Activated CD4-positive, alpha-beta T cell treated with anti-CD3 and anti-CD28 coated beads, Interleukin-2, amount 10 ng/mL, durations not matched to agents 7 days and 5 days (primary cell): ENCODE measurements at regions of chr2 and their contacts with region 1.

Region 1: DNA sequence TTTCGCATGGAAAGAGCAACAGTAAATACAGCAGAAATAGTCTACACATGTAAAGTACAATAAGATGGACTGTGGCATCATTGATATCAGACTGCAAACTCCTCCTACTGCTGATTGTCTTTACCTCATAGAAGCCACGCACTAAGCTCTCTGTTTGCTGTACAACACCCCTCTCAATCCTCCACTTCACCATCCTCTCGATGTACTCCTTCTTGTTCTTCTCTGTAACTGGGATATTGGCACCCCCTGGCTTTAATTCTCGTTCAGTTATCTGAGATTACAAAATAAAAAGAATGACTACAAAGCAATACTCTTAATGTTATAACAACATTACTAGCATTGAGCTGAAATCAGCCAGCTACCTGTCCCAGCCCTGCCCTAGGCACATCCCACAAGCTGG is 49.3 kb upstream of the STK17B start:
- DNase-seq: no peak
- H3K4me3 Mint-ChIP-seq: no peak overlapping the region
- H3K27ac Mint-ChIP-seq: peak overlapping the region; percentile 7
- H3K4me1 Mint-ChIP-seq: peaks cover 54% of the 10 kb centered on the region
- H3K27me3 Mint-ChIP-seq: no peaks in the 10 kb centered on the region

Region 2: DNA sequence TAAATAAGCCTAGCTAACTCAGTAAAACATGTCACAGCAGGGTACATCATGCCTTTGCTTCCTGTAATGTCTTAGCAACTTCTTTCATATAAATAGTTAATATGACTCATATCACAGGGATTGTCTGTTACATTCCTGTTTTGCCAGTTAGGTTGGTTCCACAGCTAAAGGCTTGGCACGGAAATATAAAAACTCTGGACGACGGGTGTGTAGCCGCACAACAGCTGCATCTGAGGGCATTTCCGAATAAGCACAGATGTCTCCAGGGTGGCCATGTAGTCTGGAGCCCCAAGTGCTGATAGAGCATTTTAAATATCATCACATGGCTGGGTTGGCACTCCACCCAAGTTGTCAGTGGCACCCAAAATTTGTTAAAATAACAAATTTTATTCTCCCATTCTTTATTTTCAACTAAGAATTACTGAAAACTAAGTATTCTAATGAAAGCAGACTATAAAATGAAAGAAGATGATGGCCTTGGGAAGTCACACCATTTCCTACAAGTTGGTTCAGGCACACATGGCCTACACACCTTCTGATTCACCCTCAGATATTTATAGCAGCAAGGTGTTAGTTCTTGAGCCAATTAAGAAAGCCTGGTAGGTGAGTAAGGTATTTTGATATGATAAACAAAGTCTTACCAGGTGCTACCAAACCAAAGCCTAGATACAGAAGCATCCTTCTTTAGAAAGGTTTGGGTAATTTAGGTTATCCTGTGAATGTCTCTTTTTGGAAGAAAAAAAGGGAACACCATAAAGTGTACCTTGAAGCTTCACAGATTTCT is 12.5 kb after region 1 on chr2:
- CTCF ChIA-PET with region 1: interaction called, 61 read pairs
- POLR2A ChIA-PET with region 1: no interaction called
- DNase-seq: no peak
- H3K4me3 Mint-ChIP-seq: no peak overlapping the region
- H3K27ac Mint-ChIP-seq: peak overlapping the region; percentile 88
- H3K4me1 Mint-ChIP-seq: peaks cover 94% of the 10 kb centered on the region
- H3K27me3 Mint-ChIP-seq: no peaks in the 10 kb centered on the region